Sigmoid colon (tissue), 7 donors: ENCODE measurements at regions of chr6 and their contacts with region 1.

Region 1: GRCh38 chr6:167350731-167351655 is 26.1 kb downstream of the TTLL2 start:
- DNase-seq: peak; percentile 82
- H3K4me3 ChIP-seq: peak overlapping the region; percentile 13 to 53 (median 48)
- H3K27ac ChIP-seq: peak overlapping the region; percentile 16 to 75 (median 55)
- H3K4me1 ChIP-seq: peaks cover 0 to 20% (median 6%) of the 10 kb centered on the region in 4 donors
- H3K27me3 ChIP-seq: peaks cover 0 to 4% (median 0%) of the 10 kb centered on the region in 3 donors
- CTCF ChIP-seq: peak; percentile 52 to 90 (median 67)
- EP300 ChIP-seq: no peak
- POLR2A ChIP-seq: no peak

Region 2: DNA sequence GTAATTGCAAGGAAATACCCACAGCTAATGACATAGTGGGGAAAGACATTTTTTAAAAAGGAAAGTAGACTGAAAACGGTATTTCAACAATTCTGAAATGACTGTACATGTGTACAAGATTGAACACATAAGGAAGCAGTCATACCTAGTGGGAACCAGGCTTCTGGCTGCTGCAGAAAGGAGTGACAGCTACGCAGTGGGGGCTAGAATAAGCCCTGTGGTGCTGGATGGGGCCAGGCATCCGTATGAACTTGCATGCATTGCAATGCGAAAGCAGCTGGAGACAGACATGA is 138.3 kb before region 1 on chr6:
- intact Hi-C with region 1: loop called (anchors 5 kb)
- DNase-seq: no peak
- H3K4me3 ChIP-seq: no peak overlapping the region
- H3K27ac ChIP-seq: no peak overlapping the region
- H3K4me1 ChIP-seq: peaks cover 0 to 10% (median 0%) of the 10 kb centered on the region in 4 donors
- H3K27me3 ChIP-seq: no peaks in the 10 kb centered on the region
- CTCF ChIP-seq: no peak
- EP300 ChIP-seq: no peak
- POLR2A ChIP-seq: no peak

Region 3: GRCh38 chr6:167311286-167311685 is 39.7 kb before region 1 on chr6:
- intact Hi-C with region 1: loop called (anchors 5 kb)
- DNase-seq: peak; percentile 78
- H3K4me3 ChIP-seq: no peak overlapping the region
- H3K27ac ChIP-seq: peak overlapping the region in 2 of 4 donors; percentile 65 to 66
- H3K4me1 ChIP-seq: peaks cover 0 to 24% (median 13%) of the 10 kb centered on the region in 4 donors
- H3K27me3 ChIP-seq: no peaks in the 10 kb centered on the region
- CTCF ChIP-seq: no peak
- EP300 ChIP-seq: no peak
- POLR2A ChIP-seq: no peak

Region 4: GRCh38 chr6:167420858-167421766 is 70.1 kb after region 1 on chr6:
- intact Hi-C with region 1: no loop called
- DNase-seq: peak; percentile 55
- H3K4me3 ChIP-seq: no peak overlapping the region
- H3K27ac ChIP-seq: no peak overlapping the region
- H3K4me1 ChIP-seq: no peaks in the 10 kb centered on the region
- H3K27me3 ChIP-seq: peaks cover 0 to 3% (median 0%) of the 10 kb centered on the region in 3 donors
- CTCF ChIP-seq: no peak
- EP300 ChIP-seq: no peak
- POLR2A ChIP-seq: peak in 1 of 2 donors; percentile 40

Region 5: DNA sequence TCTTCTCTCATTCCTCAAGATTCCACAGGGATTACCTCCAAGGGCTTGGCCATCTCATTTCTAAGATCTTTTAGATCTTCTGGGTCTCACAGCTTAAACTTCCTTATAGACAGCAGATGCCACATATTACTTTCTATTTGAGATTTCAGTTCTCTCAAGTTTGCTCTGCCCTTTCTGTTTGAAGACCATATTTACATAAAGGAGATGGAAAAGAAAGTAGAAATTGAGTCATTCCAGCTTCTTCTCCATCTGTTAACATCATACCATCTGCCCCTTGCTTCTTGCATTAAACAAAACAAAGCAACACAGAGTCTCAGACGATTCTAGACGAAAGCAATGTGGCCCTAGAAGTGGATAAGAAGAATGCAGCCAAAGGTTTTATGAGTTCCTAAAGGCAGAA is 177.2 kb after region 1 on chr6:
- intact Hi-C with region 1: no loop called
- DNase-seq: no peak
- H3K4me3 ChIP-seq: no peak overlapping the region
- H3K27ac ChIP-seq: no peak overlapping the region
- H3K4me1 ChIP-seq: no peaks in the 10 kb centered on the region
- H3K27me3 ChIP-seq: peaks cover 0 to 13% (median 0%) of the 10 kb centered on the region in 3 donors
- CTCF ChIP-seq: no peak
- EP300 ChIP-seq: no peak
- POLR2A ChIP-seq: no peak

Region 6: DNA sequence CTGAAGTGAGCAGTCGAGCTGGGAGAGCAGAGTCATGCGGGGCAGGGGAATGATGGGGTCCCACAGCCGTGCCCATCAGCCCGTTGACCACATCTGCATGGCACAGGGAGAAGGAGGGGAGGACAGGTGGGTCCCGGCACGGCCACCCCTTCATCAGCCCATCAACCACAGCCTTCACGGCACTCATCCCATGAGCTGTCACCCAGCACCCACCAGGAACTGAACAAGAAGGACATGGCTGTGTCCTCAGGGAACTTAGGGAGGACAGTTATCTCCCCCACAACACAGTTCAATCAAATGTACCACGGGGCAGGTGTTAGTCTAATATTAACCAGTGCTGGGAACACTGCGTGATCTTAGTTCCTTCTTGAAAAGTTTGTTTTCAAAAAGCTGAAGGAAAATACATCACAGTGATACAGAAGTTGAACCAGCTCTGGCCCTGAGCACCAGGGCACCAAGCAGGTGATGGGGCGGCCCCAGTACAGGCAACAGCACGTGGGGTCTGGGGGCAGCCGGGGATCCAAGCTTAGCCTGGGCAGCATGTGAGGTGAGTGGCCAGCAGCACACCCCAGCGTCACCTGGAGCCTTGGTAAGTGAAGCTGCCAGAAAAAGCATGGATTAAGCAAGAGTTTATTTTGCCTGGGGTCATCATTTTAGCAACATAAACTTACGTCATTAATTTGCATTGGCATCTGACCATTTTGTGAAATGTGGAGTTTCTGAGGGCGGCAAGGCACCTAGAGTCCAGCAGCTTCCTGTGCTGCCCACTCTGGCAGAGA is 440.2 kb after region 1 on chr6:
- intact Hi-C with region 1: no loop called
- DNase-seq: no peak
- H3K4me3 ChIP-seq: no peak overlapping the region
- H3K27ac ChIP-seq: no peak overlapping the region
- H3K4me1 ChIP-seq: no peaks in the 10 kb centered on the region
- H3K27me3 ChIP-seq: peaks cover 0 to 7% (median 5%) of the 10 kb centered on the region in 3 donors
- CTCF ChIP-seq: no peak
- EP300 ChIP-seq: no peak
- POLR2A ChIP-seq: no peak